Activated naive CD8-positive, alpha-beta T cell treated with anti-CD3 and anti-CD28 coated beads, Interleukin-2, amount 10 ng/mL, durations not matched to agents 7 days and 5 days (primary cell): ENCODE measurements at regions of chr1 and their contacts with region 1.

Region 1: DNA sequence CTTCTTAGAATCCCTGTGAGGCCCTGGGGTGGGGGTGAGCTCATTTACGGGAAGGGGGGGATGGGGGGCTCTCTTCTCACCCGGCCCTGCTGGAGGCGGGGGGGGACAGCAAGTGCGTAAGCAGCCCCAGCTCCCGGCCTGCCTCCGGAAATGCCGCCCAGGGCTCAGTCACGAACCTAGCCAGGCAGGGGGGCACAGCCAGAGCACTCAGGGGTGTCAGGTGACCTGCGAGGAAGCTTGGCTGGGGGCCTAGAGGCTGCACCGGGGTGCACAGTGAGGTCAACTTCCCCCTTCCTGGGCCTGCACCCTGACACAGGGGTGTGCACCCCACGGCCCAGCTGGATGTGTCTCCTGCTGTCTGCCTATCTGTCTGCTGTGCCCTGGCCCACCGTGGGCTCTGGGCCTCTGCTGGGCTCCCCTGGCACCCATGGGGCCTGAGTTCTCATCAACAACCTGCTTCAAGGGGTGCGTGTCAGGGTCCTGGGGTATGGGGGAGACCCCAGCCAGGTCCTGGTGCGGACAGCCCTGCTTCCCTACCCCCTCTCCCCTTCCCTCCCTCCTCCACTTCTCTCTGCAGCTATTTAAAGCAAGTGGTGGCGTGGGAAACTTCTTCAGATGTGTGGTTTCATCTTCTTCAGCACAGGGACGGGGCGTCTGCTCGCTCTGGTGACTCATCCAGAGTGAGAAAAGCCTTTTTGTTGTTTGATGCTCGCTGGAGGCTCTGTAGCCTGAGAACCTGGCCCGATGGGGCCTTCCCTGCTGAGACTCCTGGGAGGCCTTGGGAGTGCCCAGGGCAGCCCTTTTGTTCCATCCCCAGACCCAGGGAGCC is 92.5 kb upstream of the RUNX3 start:
- DNase-seq: peak; percentile 90
- ATAC-seq: peak; percentile 92
- H3K4me3 Mint-ChIP-seq: peak overlapping the region; percentile 83
- H3K27ac Mint-ChIP-seq: peak overlapping the region; percentile 97
- H3K4me1 Mint-ChIP-seq: peaks cover 82% of the 10 kb centered on the region
- H3K27me3 Mint-ChIP-seq: no peaks in the 10 kb centered on the region

Region 2: DNA sequence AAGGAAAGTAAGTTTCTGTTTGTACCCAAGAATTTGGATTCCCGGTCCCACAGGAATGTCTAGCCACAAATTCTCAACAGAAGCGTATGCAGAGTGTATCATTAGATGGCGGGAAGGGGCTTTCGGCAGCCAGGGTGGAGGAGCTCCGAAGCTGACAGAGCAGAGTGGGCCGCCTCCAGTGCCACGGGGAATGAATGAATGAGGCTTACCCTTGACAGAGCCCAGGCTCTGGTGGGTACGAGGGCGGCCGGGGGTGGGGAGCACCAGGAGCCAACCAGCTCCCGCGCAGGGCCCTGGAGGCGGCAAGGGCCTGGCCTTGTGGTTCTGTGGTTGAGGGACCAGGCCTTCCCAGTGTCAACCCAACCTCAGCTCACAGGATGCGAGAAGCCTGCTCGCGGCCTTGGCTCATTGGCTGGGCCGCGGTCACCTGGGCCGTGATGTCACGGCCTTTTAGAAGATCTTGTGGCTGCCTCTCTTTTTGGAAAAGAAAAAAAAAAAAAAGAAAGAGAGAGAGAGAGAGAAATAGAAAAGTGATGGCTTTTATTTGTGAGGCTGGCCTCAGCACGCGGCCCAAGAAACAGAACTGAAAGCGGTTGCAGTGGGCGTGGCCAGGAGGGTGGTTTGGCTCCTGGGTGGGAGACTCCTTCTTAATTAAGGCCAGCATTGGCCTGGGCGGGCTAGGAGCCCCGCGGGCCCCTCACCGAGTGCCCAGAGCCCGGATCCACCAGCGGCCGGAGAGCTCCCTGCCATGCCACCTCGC is 57.6 kb before region 1 on chr1:
- POLR2A ChIA-PET with region 1: interaction called, 215 read pairs
- DNase-seq: peak; percentile 94
- ATAC-seq: peak; percentile 77
- H3K4me3 Mint-ChIP-seq: peak overlapping the region; percentile 87
- H3K27ac Mint-ChIP-seq: peak overlapping the region; percentile 97
- H3K4me1 Mint-ChIP-seq: peaks cover 58% of the 10 kb centered on the region
- H3K27me3 Mint-ChIP-seq: no peaks in the 10 kb centered on the region

Region 3: DNA sequence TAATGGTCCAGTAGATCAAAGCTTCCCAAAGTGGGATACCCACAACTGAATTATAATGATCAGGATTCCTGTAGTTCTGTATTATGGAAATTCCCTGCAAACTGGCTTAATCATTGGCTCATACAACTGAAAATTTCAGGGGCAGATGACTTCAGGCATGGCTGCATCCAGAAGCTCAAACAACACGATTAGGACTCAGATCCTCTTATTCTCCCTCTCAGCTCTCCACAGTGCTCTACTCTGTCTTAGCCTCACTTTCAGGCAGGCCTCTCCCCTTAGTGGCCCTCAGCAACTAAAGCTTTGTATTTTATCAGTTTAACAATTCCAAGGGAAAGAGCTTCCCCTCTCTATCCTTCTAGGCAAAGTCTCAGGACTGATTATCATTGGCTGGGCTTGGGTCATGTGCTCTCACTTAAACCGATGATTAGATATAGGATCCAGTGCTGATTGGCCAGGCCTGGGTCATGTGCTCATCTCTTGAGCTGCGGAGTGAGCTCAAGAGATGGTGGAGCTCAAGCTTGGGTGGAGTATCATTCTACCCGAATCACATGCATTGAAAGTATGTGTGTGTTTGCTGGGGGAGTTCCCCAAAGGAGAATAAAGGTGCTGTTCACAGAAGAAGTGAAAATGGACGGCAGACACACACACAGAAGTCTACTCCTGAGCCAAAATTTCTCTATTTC is 34.6 kb before region 1 on chr1:
- POLR2A ChIA-PET with region 1: interaction called, 30 read pairs
- DNase-seq: peak; percentile 29
- ATAC-seq: peak; percentile 44
- H3K4me3 Mint-ChIP-seq: peak overlapping the region; percentile 50
- H3K27ac Mint-ChIP-seq: peak overlapping the region; percentile 87
- H3K4me1 Mint-ChIP-seq: peaks cover 92% of the 10 kb centered on the region
- H3K27me3 Mint-ChIP-seq: no peaks in the 10 kb centered on the region

Region 4: DNA sequence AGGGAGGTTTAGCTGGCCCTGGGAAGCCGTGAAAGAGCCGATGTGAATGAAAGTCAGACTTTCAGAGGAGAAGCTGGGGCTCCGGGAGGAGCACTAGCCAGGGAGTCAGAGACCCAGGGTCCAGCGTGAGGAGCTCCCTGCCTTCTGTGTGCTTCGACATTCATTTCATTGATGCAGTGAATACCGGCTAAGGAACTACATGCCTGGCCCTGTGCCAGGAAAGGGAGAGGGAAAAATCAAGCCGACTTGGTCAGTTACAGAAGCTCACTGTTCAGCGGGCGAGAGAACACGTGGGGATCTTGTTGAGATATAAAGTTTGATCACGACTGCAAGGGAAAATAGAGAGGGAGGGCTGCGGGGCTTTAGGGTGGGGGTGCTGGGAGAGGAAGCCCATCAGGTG is 15.8 kb before region 1 on chr1:
- POLR2A ChIA-PET with region 1: interaction called, 23 read pairs
- DNase-seq: no peak
- ATAC-seq: no peak
- H3K4me3 Mint-ChIP-seq: peak overlapping the region; percentile 2
- H3K27ac Mint-ChIP-seq: peak overlapping the region; percentile 75
- H3K4me1 Mint-ChIP-seq: peaks cover 71% of the 10 kb centered on the region
- H3K27me3 Mint-ChIP-seq: no peaks in the 10 kb centered on the region

Region 5: GRCh38 chr1:25065795-25066238 is 43.2 kb after region 1 on chr1:
- POLR2A ChIA-PET with region 1: no interaction called
- DNase-seq: no peak
- ATAC-seq: no peak
- H3K4me3 Mint-ChIP-seq: no peak overlapping the region
- H3K27ac Mint-ChIP-seq: no peak overlapping the region
- H3K4me1 Mint-ChIP-seq: peaks cover 16% of the 10 kb centered on the region
- H3K27me3 Mint-ChIP-seq: peaks cover 7% of the 10 kb centered on the region

Region 6: GRCh38 chr1:25099343-25099951 is 76.9 kb after region 1 on chr1:
- POLR2A ChIA-PET with region 1: interaction called, 11 read pairs
- DNase-seq: peak; percentile 67
- ATAC-seq: peak; percentile 57
- H3K4me3 Mint-ChIP-seq: peak overlapping the region; percentile 73
- H3K27ac Mint-ChIP-seq: peak overlapping the region; percentile 87
- H3K4me1 Mint-ChIP-seq: peaks cover 76% of the 10 kb centered on the region
- H3K27me3 Mint-ChIP-seq: no peaks in the 10 kb centered on the region